B cell (primary cell): ENCODE measurements at regions of chr6 and their contacts with region 1.

Region 1: DNA sequence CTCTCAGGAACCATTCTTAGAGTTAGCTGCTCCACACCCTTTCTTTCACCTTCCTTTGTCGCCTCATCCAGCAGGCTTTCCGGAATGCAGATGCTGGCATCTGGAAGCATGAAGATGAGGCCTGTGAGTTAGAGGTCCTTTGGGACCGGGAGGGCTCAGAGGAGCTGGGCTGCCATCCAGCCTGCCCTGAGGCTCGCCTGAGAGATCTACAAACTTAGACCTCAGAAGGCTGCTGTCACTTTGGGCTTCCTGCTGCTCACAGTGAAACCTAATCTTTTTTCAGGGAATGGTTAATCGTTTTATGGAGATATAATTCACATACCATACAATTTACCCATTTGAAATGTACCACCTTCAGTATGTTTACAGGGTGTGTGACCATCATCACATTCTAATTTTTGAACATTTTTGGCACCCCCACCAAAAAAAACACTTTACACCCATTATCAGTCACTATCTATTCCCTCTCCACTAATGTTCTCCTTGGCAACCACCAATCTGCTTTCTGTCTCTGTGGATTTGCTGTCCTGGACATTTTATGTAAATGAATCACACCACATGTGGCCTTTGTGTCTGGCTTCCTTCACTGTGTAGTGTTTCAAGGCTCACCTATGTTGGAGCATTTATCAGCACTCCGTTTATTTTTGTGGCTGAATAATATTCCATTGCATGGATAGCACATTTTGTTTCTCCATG is 20.0 kb upstream of the MPC1 start:
- DNase-seq: no peak
- ATAC-seq: no peak
- H3K4me3 ChIP-seq: no peak overlapping the region
- H3K4me3 Mint-ChIP-seq: no peak overlapping the region
- H3K27ac ChIP-seq: no peak overlapping the region
- H3K27ac Mint-ChIP-seq: no peak overlapping the region
- H3K4me1 ChIP-seq: no peaks in the 10 kb centered on the region
- H3K4me1 Mint-ChIP-seq: no peaks in the 10 kb centered on the region
- H3K27me3 ChIP-seq: peaks cover 0 to 2% (median 0%) of the 10 kb centered on the region in 4 experiments
- H3K27me3 Mint-ChIP-seq: peaks cover 13% of the 10 kb centered on the region
- CTCF ChIP-seq: no peak

Region 2: DNA sequence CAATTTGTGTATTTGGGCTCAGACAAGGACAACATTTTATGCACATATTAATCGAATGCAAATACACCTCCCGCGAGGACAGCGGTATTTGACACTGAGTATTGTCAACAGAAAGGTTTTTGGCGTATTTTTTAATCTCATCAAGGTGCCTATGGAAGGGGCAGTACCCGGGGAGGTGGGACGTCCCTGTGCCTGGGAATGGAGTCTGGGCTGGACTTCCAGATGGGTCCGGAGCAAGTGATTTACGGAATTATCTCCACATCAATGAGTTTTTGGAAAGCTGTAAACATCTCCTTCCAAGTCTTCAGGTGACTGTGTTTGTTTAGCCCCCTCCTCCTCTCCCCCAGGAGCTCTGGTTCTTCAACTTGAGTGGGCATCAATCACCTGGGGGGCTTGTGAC is 134.3 kb before region 1 on chr6:
- CTCF ChIA-PET with region 1: interaction called, 149 read pairs
- POLR2A ChIA-PET with region 1: no interaction called
- intact Hi-C with region 1: no loop called
- DNase-seq: no peak
- ATAC-seq: no peak
- H3K4me3 ChIP-seq: no peak overlapping the region
- H3K4me3 Mint-ChIP-seq: no peak overlapping the region
- H3K27ac ChIP-seq: no peak overlapping the region
- H3K27ac Mint-ChIP-seq: no peak overlapping the region
- H3K4me1 ChIP-seq: no peaks in the 10 kb centered on the region
- H3K4me1 Mint-ChIP-seq: no peaks in the 10 kb centered on the region
- H3K27me3 ChIP-seq: no peaks in the 10 kb centered on the region
- H3K27me3 Mint-ChIP-seq: peaks cover 7% of the 10 kb centered on the region
- CTCF ChIP-seq: no peak

Region 3: GRCh38 chr6:166281104-166281503 is 121.6 kb before region 1 on chr6:
- CTCF ChIA-PET with region 1: interaction called, 149 read pairs
- POLR2A ChIA-PET with region 1: no interaction called
- intact Hi-C with region 1: no loop called
- DNase-seq: no peak
- ATAC-seq: no peak
- H3K4me3 ChIP-seq: no peak overlapping the region
- H3K4me3 Mint-ChIP-seq: no peak overlapping the region
- H3K27ac ChIP-seq: no peak overlapping the region
- H3K27ac Mint-ChIP-seq: no peak overlapping the region
- H3K4me1 ChIP-seq: peaks cover 5 to 6% of the 10 kb centered on the region in 2 donors
- H3K4me1 Mint-ChIP-seq: peaks cover 15% of the 10 kb centered on the region
- H3K27me3 ChIP-seq: no peaks in the 10 kb centered on the region
- H3K27me3 Mint-ChIP-seq: peaks cover 3% of the 10 kb centered on the region
- CTCF ChIP-seq: no peak

Region 4: DNA sequence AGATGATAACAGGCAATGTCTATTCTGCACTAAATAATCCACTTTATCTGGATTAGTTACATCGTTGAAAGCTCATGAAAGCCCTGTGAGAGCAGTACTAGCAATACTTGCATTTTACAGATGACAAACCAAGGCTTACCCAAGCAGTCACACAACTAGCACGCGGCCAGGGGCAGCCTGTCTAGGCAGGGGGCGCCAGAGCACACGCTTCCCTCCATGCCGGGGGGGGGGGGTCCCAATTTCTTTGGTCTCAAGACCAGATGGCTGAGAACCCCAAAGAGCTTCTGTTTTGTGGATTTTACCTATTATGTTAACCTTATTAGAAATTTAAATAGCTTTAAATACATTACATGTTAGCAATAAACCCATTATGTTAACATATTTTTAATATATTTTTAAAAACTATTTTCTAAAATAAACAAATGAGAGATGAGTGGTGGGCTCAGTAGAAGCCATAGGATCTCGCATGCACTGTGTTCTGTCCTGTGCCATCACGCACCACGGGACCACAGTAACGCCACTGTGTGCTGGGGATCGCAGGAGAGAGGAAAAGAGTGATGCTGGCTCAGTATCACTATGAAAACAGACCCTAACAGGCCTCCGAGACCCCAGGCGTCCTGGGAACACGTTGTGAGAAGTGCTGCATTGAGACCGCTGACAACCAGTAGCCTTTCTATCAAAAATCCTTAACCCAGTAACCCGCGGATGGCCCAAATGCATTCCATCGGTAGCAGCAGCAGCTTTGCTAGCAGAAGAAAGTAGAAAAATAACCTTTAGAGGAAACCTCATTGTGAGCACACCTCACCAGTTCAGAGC is 89.3 kb before region 1 on chr6:
- CTCF ChIA-PET with region 1: interaction called, 266 read pairs
- POLR2A ChIA-PET with region 1: interaction called, 4 read pairs
- intact Hi-C with region 1: loop called (anchors 1 kb)
- DNase-seq: peak; percentile 76
- ATAC-seq: peak; percentile 88
- H3K4me3 ChIP-seq: no peak overlapping the region
- H3K4me3 Mint-ChIP-seq: no peak overlapping the region
- H3K27ac ChIP-seq: no peak overlapping the region
- H3K27ac Mint-ChIP-seq: no peak overlapping the region
- H3K4me1 ChIP-seq: peaks cover 3 to 4% of the 10 kb centered on the region in 2 donors
- H3K4me1 Mint-ChIP-seq: peaks cover 4% of the 10 kb centered on the region
- H3K27me3 ChIP-seq: peaks cover 0 to 19% (median 7%) of the 10 kb centered on the region in 4 experiments
- H3K27me3 Mint-ChIP-seq: peaks cover 16% of the 10 kb centered on the region
- CTCF ChIP-seq: peak; percentile 84

Region 5: DNA sequence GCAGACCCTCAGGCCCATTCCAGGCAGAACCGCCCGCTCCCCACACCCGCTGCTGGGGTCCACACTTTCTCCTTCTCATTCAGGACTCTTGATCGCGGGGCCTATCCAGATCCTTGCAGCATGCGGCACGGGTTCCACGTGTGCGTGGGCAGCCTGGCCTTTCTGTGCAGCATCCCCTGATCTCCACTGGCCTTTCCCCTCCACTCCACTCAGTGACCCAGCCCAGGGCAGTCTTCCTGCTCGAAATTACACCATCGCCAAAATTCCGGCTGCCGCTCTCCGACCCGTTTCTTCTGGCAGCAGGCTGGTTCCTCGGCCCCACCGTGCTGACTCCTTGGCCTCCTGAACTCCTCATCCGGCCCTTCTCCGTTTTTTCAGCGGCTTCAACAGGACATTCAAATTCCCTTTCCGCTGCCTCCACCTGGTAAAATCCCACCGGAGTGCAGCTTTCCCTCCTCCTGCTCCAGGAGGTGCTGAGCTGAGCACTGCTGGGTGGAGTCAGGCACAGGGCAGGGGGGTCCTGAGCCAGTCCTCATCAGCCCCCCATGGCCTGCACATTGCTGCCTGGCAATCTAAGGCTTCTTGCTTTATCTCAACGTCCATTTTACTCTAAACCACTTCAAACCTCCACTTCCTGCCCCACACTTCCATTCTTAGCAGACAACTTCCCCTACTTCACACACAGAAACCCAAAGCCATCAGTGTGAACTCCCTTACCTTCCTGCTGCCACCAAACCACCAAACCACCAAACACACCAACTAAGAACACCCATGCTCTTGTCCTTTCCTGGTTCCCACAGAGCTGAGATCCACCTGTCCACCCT is 69.3 kb before region 1 on chr6:
- CTCF ChIA-PET with region 1: interaction called, 11 read pairs
- POLR2A ChIA-PET with region 1: no interaction called
- intact Hi-C with region 1: no loop called
- DNase-seq: peak; percentile 52
- ATAC-seq: peak; percentile 61
- H3K4me3 ChIP-seq: peak overlapping the region in 1 of 5 experiments; percentile 26
- H3K4me3 Mint-ChIP-seq: peak overlapping the region; percentile 65
- H3K27ac ChIP-seq: peak overlapping the region; percentile 59 to 77
- H3K27ac Mint-ChIP-seq: peak overlapping the region; percentile 87
- H3K4me1 ChIP-seq: peaks cover 23 to 48% of the 10 kb centered on the region in 2 donors
- H3K4me1 Mint-ChIP-seq: peaks cover 59% of the 10 kb centered on the region
- H3K27me3 ChIP-seq: no peaks in the 10 kb centered on the region
- H3K27me3 Mint-ChIP-seq: no peaks in the 10 kb centered on the region
- CTCF ChIP-seq: no peak

Region 6: DNA sequence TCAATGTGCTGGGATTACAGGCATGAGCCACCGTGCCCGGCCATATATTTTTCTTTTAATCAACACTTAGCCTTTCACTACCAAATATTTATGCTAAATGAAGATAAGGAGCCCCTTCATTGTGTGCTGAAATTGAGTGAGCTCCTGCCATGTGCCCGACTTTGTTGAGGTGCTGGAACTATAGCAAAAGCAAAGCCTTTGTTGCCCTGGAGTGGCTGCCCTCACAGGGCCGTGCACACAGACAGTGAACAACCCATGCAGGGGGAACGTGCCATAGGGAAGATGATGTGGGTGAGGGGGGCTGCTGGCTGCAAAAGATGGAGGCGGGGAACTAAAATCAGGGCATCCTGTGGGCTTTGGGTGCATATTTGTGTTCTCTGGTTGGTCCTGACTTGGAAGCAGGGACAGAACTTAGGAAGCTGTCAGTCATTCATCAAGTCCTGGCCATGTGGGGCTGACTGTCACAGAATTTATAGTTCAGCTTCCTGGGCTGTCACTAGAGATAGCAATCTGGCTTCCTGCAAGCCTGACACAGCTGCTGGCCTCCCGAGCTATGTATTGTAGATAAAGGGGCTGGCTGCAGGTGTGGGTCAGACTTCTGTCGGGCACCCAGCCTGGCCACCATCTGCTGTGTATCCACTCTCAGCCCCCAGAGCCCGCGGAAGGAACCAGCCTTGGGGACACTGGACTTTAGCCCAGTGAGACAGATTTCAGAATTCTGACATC is 36.8 kb after region 1 on chr6:
- CTCF ChIA-PET with region 1: no interaction called
- POLR2A ChIA-PET with region 1: no interaction called
- intact Hi-C with region 1: no loop called
- DNase-seq: no peak
- ATAC-seq: no peak
- H3K4me3 ChIP-seq: no peak overlapping the region
- H3K4me3 Mint-ChIP-seq: no peak overlapping the region
- H3K27ac ChIP-seq: no peak overlapping the region
- H3K27ac Mint-ChIP-seq: no peak overlapping the region
- H3K4me1 ChIP-seq: peaks cover 4 to 6% of the 10 kb centered on the region in 2 donors
- H3K4me1 Mint-ChIP-seq: peaks cover 6% of the 10 kb centered on the region
- H3K27me3 ChIP-seq: peaks cover 0 to 31% (median 8%) of the 10 kb centered on the region in 4 experiments
- H3K27me3 Mint-ChIP-seq: peaks cover 49% of the 10 kb centered on the region
- CTCF ChIP-seq: no peak